ENCODE measurements at regions of chr19 and their contacts with region 1.

Region 1: DNA sequence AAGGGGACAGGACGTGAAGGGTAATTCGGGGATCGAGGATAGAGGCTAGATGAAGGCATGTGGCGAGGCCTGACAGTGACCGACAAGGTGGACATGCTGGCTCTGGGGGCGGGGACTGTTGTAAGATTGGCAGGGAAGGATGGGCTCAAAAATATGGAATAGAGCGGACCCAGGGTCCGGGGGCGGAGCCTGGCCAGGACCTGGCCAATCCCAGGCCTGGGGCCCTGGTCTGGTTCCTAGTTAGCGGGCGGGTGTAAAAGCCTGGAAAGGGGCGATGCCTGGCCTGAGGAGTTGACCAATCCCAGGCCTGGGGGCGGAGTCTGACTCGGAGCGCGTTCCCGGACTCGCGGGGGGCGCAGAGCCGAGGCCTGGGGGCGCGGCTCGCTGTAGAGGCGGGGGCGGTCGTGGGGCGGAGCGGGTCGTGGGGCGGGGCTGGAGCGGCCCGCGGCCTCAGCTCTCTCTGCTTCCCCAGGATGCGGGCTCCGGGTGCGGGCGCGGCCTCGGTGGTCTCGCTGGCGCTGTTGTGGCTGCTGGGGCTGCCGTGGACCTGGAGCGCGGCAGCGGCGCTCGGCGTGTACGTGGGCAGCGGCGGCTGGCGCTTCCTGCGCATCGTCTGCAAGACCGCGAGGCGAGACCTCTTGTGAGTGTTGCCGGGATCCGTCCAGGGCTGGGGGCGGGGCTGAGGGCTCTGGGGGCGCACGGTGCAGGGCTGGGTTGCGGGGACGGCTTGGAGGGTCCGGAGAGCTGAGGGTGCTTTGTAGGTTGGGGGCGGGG is at the start of gene SLC27A1:
- DNase-seq: peak; percentile 85
- ATAC-seq: peak; percentile 81
- H3K4me3 Mint-ChIP-seq: peak within 1 kb of the TSS; percentile 91
- H3K27ac Mint-ChIP-seq: peak within 1 kb of the TSS; percentile 84
- H3K4me1 Mint-ChIP-seq: peaks cover 23% of the 10 kb centered on the region
- H3K27me3 Mint-ChIP-seq: no peaks in the 10 kb centered on the region
- CTCF ChIP-seq: no peak
- total RNA-seq, gene SLC27A1: 4.3 and 4.6 TPM in 2 replicates

Region 2: GRCh38 chr19:17260842-17261325 is 209.4 kb before region 1 on chr19:
- CTCF ChIA-PET with region 1: interaction called, 3 read pairs
- POLR2A ChIA-PET with region 1: no interaction called
- intact Hi-C with region 1: loop called (anchors 1 kb)
- DNase-seq: peak; percentile 83
- ATAC-seq: peak; percentile 100
- H3K4me3 Mint-ChIP-seq: no peak overlapping the region
- H3K27ac Mint-ChIP-seq: no peak overlapping the region
- H3K4me1 Mint-ChIP-seq: peaks cover 11% of the 10 kb centered on the region
- H3K27me3 Mint-ChIP-seq: no peaks in the 10 kb centered on the region
- CTCF ChIP-seq: peak; percentile 74

Region 3: GRCh38 chr19:17292286-17293097 is 177.8 kb before region 1 on chr19:
- CTCF ChIA-PET with region 1: no interaction called
- POLR2A ChIA-PET with region 1: no interaction called
- intact Hi-C with region 1: loop called (anchors 2 kb)
- DNase-seq: peak; percentile 90
- ATAC-seq: peak; percentile 91
- H3K4me3 Mint-ChIP-seq: peak overlapping the region; percentile 85
- H3K27ac Mint-ChIP-seq: peak overlapping the region; percentile 53
- H3K4me1 Mint-ChIP-seq: peaks cover 10% of the 10 kb centered on the region
- H3K27me3 Mint-ChIP-seq: peaks cover 2% of the 10 kb centered on the region
- CTCF ChIP-seq: no peak

Region 4: GRCh38 chr19:17346109-17346671 is 124.1 kb before region 1 on chr19:
- CTCF ChIA-PET with region 1: no interaction called
- POLR2A ChIA-PET with region 1: no interaction called
- intact Hi-C with region 1: loop called (anchors 1 kb)
- DNase-seq: peak; percentile 79
- ATAC-seq: peak; percentile 98
- H3K4me3 Mint-ChIP-seq: no peak overlapping the region
- H3K27ac Mint-ChIP-seq: no peak overlapping the region
- H3K4me1 Mint-ChIP-seq: peaks cover 6% of the 10 kb centered on the region
- H3K27me3 Mint-ChIP-seq: peaks cover 15% of the 10 kb centered on the region
- CTCF ChIP-seq: peak; percentile 84

Region 5: DNA sequence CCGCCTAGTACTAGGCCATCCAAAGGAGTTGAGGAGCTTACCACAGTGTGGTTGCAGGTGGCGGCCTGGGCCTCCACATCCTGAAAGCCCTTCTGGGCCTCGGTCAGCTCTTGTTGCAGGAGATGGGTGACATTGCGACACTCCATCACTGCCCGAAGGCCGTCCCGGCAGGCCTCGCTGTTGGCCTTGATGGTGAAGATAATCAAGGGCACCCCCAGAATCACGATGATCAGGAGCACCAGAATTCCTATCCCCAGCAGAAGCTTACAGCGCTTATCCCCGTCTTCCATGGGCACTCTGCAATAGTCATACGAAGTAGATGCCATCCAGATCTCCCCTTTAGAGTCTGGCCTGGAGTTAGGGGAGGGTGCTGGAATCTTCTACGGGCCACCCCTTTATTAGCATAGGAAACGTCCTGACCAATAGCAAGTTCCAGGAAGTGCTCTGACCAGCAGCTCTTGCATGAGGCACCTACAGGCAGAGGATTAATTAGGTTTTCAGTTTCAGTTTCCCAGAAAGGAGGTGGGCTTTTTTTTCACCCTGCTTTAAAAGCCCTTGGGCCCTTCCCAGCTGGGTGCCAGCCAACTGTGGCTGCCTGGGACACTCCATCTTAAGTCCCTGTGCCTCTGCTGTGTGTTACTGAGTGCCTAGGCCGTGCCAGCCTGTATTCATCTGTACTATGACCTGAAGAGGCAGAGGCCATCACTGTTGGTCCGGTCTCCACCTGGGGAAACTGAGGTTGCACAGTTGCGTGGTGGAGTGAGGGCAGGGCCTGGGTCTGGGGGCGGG is 64.8 kb before region 1 on chr19 and contains the start of gene BST2:
- CTCF ChIA-PET with region 1: interaction called, 7 read pairs
- POLR2A ChIA-PET with region 1: interaction called, 5 read pairs
- intact Hi-C with region 1: loop called (anchors 2 kb)
- DNase-seq: peak; percentile 42
- ATAC-seq: peak; percentile 86
- H3K4me3 Mint-ChIP-seq: peak within 1 kb of the TSS; percentile 92
- H3K27ac Mint-ChIP-seq: peak within 1 kb of the TSS; percentile 93
- H3K4me1 Mint-ChIP-seq: peaks cover 49% of the 10 kb centered on the region
- H3K27me3 Mint-ChIP-seq: no peaks in the 10 kb centered on the region
- CTCF ChIP-seq: no peak
- total RNA-seq, gene BST2: 120 and 121 TPM in 2 replicates

Region 6: DNA sequence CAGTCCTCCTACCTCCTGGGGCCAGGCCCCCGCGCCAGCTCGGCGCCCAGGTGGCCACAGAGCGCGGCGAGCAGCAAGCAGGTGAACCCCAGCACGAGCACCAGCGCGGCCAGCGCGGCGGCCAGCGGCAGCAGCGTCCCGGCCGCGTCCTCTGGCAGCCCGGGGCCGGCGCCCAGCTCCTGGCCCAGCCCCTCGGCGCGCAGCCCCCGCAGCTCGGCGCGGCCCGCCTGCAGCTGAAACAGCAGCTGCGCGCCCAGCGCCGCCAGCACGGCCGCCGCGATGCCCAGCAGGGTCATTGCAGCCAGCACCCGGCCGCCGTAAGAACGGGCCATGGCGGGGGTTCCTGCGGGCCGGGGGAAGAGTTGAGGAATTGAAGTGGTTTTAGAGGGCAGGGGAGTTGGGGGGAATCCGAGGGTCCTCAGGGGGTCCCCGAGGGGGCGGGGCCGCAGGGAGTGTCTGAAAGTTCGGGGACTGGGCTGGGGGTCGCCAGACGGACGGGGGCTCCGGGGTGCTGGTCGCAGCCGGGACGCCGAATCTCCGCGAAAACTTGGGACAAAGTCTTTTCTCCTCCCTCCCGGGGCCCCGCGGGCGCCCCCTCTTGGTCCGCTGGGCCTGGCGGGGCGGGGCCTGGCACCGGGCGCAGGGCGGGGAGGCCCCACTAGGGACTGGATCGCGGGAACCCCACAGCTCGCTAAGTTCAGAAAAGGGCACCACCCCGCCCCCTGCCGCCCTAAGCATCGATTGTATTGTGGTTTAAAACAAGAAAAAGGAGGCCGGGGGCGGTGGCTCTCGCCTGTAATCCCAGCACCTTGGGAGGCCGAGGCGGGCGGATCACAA is 21.9 kb before region 1 on chr19 and contains the start of gene TMEM221:
- CTCF ChIA-PET with region 1: no interaction called
- POLR2A ChIA-PET with region 1: no interaction called
- intact Hi-C with region 1: loop called (anchors 1 kb)
- DNase-seq: peak; percentile 49
- ATAC-seq: peak; percentile 86
- H3K4me3 Mint-ChIP-seq: peak within 1 kb of the TSS; percentile 19
- H3K27ac Mint-ChIP-seq: no peak within 1 kb of the TSS
- H3K4me1 Mint-ChIP-seq: peaks cover 10% of the 10 kb centered on the region
- H3K27me3 Mint-ChIP-seq: peaks cover 24% of the 10 kb centered on the region
- CTCF ChIP-seq: no peak
- total RNA-seq, gene TMEM221: not detected in 2 replicates

Region 7: GRCh38 chr19:17538684-17539237 is 68.5 kb after region 1 on chr19:
- CTCF ChIA-PET with region 1: no interaction called
- POLR2A ChIA-PET with region 1: no interaction called
- intact Hi-C with region 1: no loop called
- DNase-seq: peak; percentile 48
- ATAC-seq: peak; percentile 22
- H3K4me3 Mint-ChIP-seq: peak overlapping the region; percentile 80
- H3K27ac Mint-ChIP-seq: peak overlapping the region; percentile 62
- H3K4me1 Mint-ChIP-seq: peaks cover 51% of the 10 kb centered on the region
- H3K27me3 Mint-ChIP-seq: no peaks in the 10 kb centered on the region
- CTCF ChIP-seq: no peak